Panc1 (cell line): ENCODE measurements at regions of chr10 and their contacts with region 1.

Region 1: DNA sequence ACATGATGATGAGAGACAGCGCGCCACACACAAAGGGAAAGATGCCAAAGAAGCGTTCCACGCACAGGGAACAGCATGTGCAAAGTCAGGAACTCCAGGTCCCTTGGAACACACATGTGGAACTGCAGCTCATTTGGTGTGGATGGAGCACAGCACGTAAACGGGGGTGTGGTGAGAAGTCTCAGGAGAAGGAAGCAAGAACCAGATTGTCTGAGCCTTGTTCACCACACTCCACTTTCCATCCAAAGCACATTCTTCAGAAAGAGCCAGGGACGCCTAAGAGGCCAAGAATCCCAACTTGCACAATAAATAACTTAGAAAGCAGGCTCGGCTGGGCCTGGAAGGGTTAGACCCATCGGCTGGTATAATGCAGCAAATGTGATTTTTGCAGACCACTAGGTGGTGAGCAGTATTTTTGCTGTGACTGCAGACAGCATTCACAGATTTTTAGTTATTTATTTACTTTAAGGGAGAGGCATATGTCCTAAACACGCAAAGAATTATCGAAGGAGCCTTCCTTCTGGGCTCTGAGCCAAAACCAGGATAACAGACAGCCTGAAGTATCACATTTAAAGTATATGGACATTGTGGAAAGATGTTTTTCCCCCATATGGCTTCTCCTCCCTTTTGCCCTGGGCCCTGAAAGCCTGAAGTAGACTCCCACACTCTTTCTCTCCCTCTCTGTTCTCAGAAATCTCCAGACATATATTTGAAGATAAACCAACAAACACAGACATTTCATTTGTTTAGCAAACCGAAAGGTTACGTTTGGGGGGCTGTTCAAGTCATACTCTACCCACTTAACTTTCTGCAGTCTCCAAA is 28.0 kb upstream of the ASCC1 start:
- DNase-seq: no peak
- ATAC-seq: peak; percentile 64
- H3K4me3 ChIP-seq: no peak overlapping the region
- H3K27ac ChIP-seq: peak overlapping the region; percentile 83
- H3K4me1 ChIP-seq: peaks cover 28% of the 10 kb centered on the region
- H3K27me3 ChIP-seq: no peaks in the 10 kb centered on the region
- CTCF ChIP-seq: no peak

Region 2: DNA sequence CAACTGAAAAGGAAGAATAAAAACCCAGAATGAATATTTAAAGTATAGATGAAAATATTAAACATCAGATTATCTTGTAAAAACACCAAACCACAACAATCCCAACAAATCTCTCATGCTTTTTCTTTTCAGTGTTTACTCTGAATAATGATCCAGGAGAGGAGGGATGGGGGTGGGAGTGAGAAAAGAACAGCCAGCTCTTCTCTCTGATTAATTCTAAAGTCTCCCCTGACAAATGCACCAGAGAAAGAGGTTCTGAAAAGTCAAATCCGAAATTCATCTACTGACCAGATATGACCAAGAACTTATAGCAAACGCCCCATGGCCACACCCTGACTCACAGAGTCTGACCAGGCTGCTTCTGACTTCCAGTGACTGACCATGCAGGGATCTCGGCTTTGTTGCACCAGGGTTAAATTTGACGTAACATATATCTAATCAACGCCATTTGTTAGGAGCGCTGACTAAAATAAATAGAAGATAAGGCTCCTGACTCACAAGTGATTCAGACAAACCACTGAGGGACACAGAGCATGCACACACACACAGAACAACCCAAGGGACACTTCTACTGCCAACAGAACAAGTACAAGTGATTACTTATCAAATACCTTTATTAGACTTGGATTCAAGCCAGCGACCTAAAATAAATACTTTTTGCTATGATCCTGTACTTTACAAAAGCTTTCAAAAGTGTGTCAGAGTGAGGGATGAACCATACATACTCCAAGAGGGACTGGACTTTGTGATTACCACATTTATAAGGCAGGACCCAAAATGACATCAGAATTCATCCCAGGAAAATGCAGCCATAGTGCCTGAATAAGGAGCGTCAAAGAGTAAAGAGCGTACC is 146.4 kb before region 1 on chr10:
- CTCF ChIA-PET with region 1: no interaction called
- POLR2A ChIA-PET with region 1: no interaction called
- in situ Hi-C with region 1: no loop called
- intact Hi-C with region 1: no loop called
- DNase-seq: peak; percentile 94
- ATAC-seq: peak; percentile 93
- H3K4me3 ChIP-seq: no peak overlapping the region
- H3K27ac ChIP-seq: peak overlapping the region; percentile 79
- H3K4me1 ChIP-seq: peaks cover 40% of the 10 kb centered on the region
- H3K27me3 ChIP-seq: no peaks in the 10 kb centered on the region
- CTCF ChIP-seq: no peak

Region 3: GRCh38 chr10:72736176-72736827 is 492.3 kb after region 1 on chr10:
- CTCF ChIA-PET with region 1: no interaction called
- POLR2A ChIA-PET with region 1: interaction called, 11 read pairs
- in situ Hi-C with region 1: no loop called
- intact Hi-C with region 1: no loop called
- DNase-seq: no peak
- ATAC-seq: no peak
- H3K4me3 ChIP-seq: no peak overlapping the region
- H3K27ac ChIP-seq: no peak overlapping the region
- H3K4me1 ChIP-seq: peaks cover 5% of the 10 kb centered on the region
- H3K27me3 ChIP-seq: no peaks in the 10 kb centered on the region
- CTCF ChIP-seq: no peak